ENCODE measurements at regions of chr13 and their contacts with region 1.

Region 1: GRCh38 chr13:113816946-113817859 is 46.7 kb downstream of the GAS6 start:
- DNase-seq: peak; percentile 88 to 96
- H3K4me3 ChIP-seq: no peak overlapping the region
- H3K27ac ChIP-seq: peak overlapping the region; percentile 68 to 72
- H3K4me1 ChIP-seq: peaks cover 10 to 16% of the 10 kb centered on the region in 2 donors
- H3K27me3 ChIP-seq: no peaks in the 10 kb centered on the region
- CTCF ChIP-seq: peak; percentile 87 to 96 (median 92)
- POLR2A ChIP-seq: peak in 1 of 2 donors; percentile 8

Region 2: DNA sequence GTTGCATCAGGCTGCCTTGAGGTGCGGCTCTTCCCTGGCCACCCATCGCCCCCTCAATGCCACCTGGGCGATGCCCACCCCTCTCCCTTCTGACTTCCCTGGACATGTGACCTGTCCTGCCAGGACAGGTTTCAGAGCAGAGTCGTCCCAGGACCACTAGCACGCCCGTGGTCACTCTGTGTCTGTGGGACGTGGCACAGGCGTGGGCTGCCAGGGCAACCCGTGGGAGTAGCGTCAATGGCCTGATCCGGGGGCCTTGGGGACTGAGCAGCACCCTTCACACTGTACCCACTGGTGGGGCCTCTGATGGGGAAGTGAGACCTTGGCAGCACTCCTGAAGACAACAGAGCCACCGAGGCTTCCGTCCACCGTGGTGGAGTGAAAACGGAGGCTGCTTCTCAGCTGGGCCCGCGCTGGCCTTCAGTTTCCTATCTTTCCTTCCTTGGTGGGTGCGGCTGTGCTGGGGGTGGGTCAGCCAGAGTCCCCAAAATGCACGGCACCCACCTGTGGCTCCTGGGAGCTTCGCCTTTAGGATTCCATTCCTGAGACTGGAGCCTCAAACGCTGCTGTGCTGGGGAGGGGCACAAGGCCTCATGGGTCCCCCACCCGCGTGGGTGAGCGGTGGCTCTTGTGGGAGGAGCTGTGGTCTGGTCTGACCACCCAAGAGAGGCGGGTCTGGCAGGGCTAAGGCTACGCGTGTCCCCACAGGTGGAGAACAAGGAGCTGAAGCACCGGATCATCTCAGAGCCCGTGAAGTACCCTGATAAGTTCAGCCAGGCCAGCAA is 84.8 kb before region 1 on chr13:
- intact Hi-C with region 1: no loop called
- DNase-seq: no peak
- H3K4me3 ChIP-seq: no peak overlapping the region
- H3K27ac ChIP-seq: no peak overlapping the region
- H3K4me1 ChIP-seq: no peaks in the 10 kb centered on the region
- H3K27me3 ChIP-seq: no peaks in the 10 kb centered on the region
- CTCF ChIP-seq: no peak
- POLR2A ChIP-seq: no peak

Region 3: DNA sequence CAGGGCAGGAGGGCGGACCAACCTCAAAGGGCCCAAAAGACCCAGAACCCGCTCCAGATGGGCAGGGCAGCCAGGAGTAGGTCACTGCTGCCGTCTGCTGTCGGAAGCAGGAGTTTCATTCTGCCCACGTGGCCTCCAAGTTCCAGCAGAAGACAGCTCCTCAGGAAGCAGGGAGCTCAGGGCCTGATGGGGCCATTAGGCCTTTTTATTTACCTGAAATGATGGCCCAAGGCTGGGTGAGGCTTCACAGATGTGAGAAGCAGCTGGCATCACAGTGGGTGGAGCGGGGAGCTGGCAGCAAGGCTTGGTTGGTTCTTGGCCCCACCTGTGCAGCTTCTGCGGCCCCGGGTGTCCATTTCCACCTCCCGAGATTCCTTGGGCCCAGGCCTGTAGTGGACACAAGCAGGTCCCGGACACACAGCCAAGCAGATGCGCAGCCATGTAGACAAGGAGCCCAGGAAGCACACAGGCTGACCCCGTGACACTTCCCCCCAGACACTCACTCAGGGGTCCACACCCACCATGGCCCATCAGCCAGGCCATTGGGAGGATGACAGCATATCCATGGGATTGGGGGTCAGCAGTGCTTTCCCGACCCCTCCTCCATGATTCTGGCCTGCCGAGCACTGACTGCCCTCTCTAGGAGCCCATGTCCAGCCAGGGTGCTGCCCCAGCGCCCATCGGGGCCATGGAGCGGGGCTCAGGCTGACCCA is 130.3 kb after region 1 on chr13:
- intact Hi-C with region 1: loop called (anchors 5 kb)
- DNase-seq: peak; percentile 78 to 82
- H3K4me3 ChIP-seq: no peak overlapping the region
- H3K27ac ChIP-seq: peak overlapping the region; percentile 5 to 44
- H3K4me1 ChIP-seq: peaks cover 4% of the 10 kb centered on the region in 2 donors
- H3K27me3 ChIP-seq: no peaks in the 10 kb centered on the region
- CTCF ChIP-seq: peak; percentile 86 to 94 (median 92)
- POLR2A ChIP-seq: peak in 1 of 2 donors; percentile 17

Region 4: DNA sequence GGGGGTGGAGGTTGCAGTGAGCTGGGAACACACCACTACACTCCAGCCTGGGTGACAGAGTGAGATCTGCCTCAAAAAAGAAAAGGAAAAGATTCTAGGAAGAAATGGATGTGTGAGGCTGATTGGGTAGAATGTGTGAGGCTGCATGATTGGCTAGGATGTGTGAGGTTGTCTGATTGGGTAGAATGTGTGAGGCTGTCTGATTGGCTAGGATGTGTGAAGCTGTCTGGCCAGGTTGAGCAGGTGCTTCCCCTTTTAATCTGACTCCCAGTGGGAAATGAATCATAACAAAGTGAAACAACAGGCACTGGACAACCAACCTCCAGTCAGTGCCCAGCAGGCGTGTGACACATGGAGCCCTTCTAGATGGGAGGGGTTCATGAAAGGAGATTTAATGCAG is 142.0 kb after region 1 on chr13:
- intact Hi-C with region 1: no loop called
- DNase-seq: no peak
- H3K4me3 ChIP-seq: no peak overlapping the region
- H3K27ac ChIP-seq: no peak overlapping the region
- H3K4me1 ChIP-seq: no peaks in the 10 kb centered on the region
- H3K27me3 ChIP-seq: no peaks in the 10 kb centered on the region
- CTCF ChIP-seq: no peak
- POLR2A ChIP-seq: no peak

Region 5: GRCh38 chr13:113981201-113981605 is 164.0 kb after region 1 on chr13:
- intact Hi-C with region 1: no loop called
- DNase-seq: peak in 1 of 2 donors; percentile 15
- H3K4me3 ChIP-seq: no peak overlapping the region
- H3K27ac ChIP-seq: no peak overlapping the region
- H3K4me1 ChIP-seq: no peaks in the 10 kb centered on the region
- H3K27me3 ChIP-seq: no peaks in the 10 kb centered on the region
- CTCF ChIP-seq: no peak
- POLR2A ChIP-seq: no peak

Measured in uterus (tissue), 4 donors.